ENCODE measurements at regions of chr9 and their contacts with region 1.

Region 1: DNA sequence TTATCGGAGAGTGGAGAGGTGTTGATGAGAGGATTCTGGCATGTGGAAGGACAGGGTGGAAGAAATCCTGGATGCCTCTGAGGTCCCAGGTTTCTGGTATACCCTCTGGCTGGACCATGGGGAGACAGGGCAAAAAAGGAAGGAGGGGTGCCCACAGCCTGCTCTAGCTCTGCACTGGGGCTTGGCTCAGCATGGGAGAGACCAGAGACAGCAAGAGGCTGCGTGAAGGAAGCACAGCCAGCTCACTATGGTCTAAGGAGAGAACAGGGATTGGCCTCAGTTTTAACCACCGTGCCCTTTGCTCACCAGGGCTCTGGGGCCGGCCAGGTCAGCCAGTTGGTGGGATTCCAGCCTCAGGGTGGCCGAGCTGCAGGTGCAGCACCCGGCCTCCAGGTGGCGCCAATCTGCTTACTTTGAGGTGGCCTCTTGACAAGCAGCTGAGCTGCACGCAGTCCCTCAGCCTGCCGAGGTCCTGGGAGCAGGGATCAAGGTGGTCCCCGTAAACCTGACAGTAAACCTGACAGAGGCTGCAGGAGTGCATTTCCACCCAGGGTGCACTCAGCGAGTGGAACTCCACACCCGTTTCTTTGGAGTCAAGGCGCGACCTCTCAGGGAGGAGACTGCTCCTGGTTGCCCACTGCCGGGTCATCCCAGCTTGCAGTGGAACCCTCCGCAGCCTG is 25.0 kb upstream of the SPTLC1 start:
- H3K4me3 ChIP-seq: no peak overlapping the region
- H3K27ac ChIP-seq: no peak overlapping the region
- H3K4me1 ChIP-seq: no peaks in the 10 kb centered on the region
- CTCF ChIP-seq: peak; percentile 53; the same call in 1 of the 2 replicates

Region 2: GRCh38 chr9:92001244-92001643 is 139.0 kb before region 1 on chr9:
- CTCF ChIA-PET with region 1: no interaction called
- POLR2A ChIA-PET with region 1: no interaction called
- H3K4me3 ChIP-seq: no peak overlapping the region
- H3K27ac ChIP-seq: no peak overlapping the region
- H3K4me1 ChIP-seq: no peaks in the 10 kb centered on the region
- CTCF ChIP-seq: no peak

Region 3: GRCh38 chr9:92170848-92171247 is 30.6 kb after region 1 on chr9:
- CTCF ChIA-PET with region 1: interaction called, 12 read pairs
- POLR2A ChIA-PET with region 1: no interaction called
- H3K4me3 ChIP-seq: no peak overlapping the region
- H3K27ac ChIP-seq: no peak overlapping the region
- H3K4me1 ChIP-seq: no peaks in the 10 kb centered on the region
- CTCF ChIP-seq: no peak

Region 4: GRCh38 chr9:92224177-92224576 is 84.0 kb after region 1 on chr9:
- CTCF ChIA-PET with region 1: interaction called, 15 read pairs
- POLR2A ChIA-PET with region 1: no interaction called
- H3K4me3 ChIP-seq: no peak overlapping the region
- H3K27ac ChIP-seq: no peak overlapping the region
- H3K4me1 ChIP-seq: no peaks in the 10 kb centered on the region
- CTCF ChIP-seq: no peak

Region 5: GRCh38 chr9:92242260-92243136 is 102.3 kb after region 1 on chr9:
- CTCF ChIA-PET with region 1: interaction called, 106 read pairs
- POLR2A ChIA-PET with region 1: interaction called, 3 read pairs
- H3K4me3 ChIP-seq: no peak overlapping the region
- H3K27ac ChIP-seq: no peak overlapping the region
- H3K4me1 ChIP-seq: no peaks in the 10 kb centered on the region
- CTCF ChIP-seq: no peak

Region 6: DNA sequence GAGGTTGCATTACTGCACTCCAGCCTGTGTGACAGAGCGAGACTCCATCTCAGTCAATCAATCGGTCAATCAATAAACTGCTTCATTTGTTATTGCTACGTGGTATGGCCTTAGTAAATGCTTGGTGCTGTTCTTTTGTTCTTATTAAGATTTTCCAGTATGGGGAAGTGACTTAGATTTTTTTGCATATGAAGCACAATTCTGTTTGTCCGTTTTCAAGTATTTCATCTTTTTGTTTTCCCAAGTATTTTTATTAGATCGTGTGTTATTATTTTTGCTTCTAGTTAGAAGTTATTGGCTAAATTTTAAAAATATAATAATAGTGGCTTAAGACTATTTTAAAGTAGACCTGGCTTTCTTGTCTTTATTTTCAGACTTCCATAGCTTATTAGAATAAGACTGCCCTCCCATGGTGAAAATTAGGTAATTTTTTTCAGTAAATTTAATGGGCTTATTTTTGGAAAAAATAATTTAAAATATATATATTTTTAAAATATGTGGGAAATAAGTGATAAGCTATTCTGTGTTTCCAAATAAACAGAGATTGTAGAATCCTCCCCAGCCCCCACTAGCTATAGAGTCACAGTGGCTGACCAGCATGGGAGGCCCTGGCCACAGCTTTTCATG is 298.8 kb after region 1 on chr9:
- CTCF ChIA-PET with region 1: interaction called, 15 read pairs
- POLR2A ChIA-PET with region 1: no interaction called
- H3K4me3 ChIP-seq: no peak overlapping the region
- H3K27ac ChIP-seq: no peak overlapping the region
- H3K4me1 ChIP-seq: no peaks in the 10 kb centered on the region
- CTCF ChIP-seq: no peak

Region 7: DNA sequence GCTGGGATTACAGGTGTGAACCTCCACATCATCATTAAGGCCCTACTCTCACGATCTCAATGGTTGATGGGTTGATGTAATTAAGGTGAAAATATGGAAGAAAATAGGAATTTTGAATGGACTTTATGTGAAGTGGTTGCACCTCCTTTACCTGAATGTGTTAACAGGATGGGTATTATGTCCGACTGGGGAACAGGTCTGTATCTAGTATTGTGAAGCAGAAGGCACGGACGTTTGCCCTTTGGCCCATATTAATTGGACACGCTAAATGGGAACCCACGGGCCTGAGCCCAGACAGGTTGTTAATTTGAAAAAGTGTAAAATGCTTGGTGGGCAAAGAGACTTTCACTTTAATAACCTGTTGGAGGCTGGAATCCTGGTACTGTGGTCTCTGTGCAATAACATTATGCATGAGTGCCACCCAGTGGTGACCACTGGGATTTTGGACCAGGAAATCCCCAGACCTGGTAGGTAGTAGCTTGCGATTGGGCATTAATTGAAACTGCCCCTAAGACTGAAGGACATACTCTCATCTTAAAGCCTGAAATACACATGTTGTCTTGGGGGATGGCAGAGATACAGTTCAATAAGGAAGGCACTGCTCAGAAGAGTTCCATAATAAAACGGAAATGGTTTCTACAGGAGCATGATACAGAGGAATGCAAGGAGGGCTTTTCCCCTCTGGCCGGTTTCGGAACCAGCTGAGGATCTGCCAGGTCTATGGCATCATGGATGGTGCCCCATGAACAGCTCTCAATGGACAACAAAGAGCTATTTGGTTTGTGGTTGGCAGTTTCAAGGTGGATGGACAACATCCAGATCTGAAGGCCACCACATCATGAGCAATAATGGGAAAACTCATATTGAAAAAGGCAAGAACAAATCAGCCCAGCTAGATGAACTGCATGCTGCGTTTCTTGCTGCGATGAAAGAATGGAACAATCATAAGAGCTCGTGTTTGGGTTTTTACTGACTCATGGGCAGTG is 650.6 kb after region 1 on chr9:
- CTCF ChIA-PET with region 1: interaction called, 17 read pairs
- POLR2A ChIA-PET with region 1: no interaction called
- H3K4me3 ChIP-seq: no peak overlapping the region
- H3K27ac ChIP-seq: no peak overlapping the region
- H3K4me1 ChIP-seq: no peaks in the 10 kb centered on the region
- CTCF ChIP-seq: 0 out of 2 replicates have a peak, but pooled peaks have one; percentile 54

Measured in HEK293 (cell line).